Right lobe of liver (tissue), 6 donors: ENCODE measurements at regions of chr14 and their contacts with region 1.

Region 1: GRCh38 chr14:105212541-105213300 is 31.6 kb upstream of the NUDT14 start:
- DNase-seq: no peak
- ATAC-seq: no peak
- H3K4me3 ChIP-seq: no peak overlapping the region
- H3K27ac ChIP-seq: no peak overlapping the region
- H3K4me1 ChIP-seq: no peaks in the 10 kb centered on the region
- H3K27me3 ChIP-seq: no peaks in the 10 kb centered on the region
- CTCF ChIP-seq: no peak
- POLR2A ChIP-seq: no peak

Region 2: GRCh38 chr14:105100931-105101330 is 111.8 kb before region 1 on chr14:
- intact Hi-C with region 1: no loop called
- DNase-seq: no peak
- ATAC-seq: no peak
- H3K4me3 ChIP-seq: no peak overlapping the region
- H3K27ac ChIP-seq: no peak overlapping the region
- H3K4me1 ChIP-seq: no peaks in the 10 kb centered on the region
- H3K27me3 ChIP-seq: no peaks in the 10 kb centered on the region
- CTCF ChIP-seq: no peak
- POLR2A ChIP-seq: no peak

Region 3: DNA sequence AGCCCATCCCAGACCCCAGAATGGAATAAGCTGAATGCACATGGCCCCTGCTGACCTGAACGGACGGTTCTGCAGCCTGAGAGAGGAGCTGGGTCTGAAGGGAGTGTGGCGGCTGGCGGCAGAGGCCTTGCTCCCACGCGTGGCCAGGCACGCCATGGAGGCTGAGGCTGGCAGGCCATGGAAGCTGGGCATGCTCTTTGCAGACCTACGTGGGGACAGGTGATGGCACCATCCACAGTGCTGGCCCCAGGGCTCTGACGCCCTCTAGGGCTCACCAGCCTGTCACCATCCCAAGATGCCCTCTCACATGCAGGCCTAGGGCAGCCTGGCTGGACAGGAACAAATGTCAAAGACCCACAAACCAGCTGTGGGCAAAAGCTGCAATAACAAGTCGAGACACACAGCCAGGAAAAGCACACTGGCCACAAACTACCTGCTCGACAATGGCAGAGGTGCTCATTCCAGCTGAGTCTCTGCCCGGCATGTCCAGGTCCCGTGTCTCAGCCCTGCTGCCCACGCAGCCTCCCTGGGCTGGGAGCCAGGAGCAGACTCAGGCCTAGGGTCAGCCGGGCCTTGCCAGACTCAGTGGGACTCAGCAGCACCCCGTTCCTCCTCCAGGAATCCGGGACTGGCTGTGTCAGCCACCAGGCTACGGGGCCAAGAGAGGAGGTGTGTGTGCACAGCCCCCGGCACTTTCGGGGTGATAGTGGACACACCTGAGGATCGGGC is 55.3 kb after region 1 on chr14:
- intact Hi-C with region 1: loop called in 1 of 2 experiments (anchors 10 kb)
- DNase-seq: no peak
- ATAC-seq: peak; percentile 67 to 85 (median 70)
- H3K4me3 ChIP-seq: no peak overlapping the region
- H3K27ac ChIP-seq: no peak overlapping the region
- H3K4me1 ChIP-seq: no peaks in the 10 kb centered on the region
- H3K27me3 ChIP-seq: no peaks in the 10 kb centered on the region
- CTCF ChIP-seq: peak in 2 of 4 donors; percentile 13 to 25
- POLR2A ChIP-seq: no peak

Region 4: GRCh38 chr14:105300792-105301533 is 88.2 kb after region 1 on chr14 and contains the start of gene BRF1:
- intact Hi-C with region 1: no loop called
- DNase-seq: peak; percentile 99 to 100 (median 100)
- ATAC-seq: peak; percentile 95 to 96 (median 96)
- H3K4me3 ChIP-seq: peak within 1 kb of the TSS; percentile 55 to 96 (median 77)
- H3K27ac ChIP-seq: peak within 1 kb of the TSS; percentile 36 to 89 (median 80)
- H3K4me1 ChIP-seq: peaks cover 0 to 17% (median 7%) of the 10 kb centered on the region in 4 donors
- H3K27me3 ChIP-seq: no peaks in the 10 kb centered on the region
- CTCF ChIP-seq: no peak
- POLR2A ChIP-seq: peak; percentile 87
- total RNA-seq, gene BRF1: 13.1 to 17.8 (median 16.2) TPM

Region 5: DNA sequence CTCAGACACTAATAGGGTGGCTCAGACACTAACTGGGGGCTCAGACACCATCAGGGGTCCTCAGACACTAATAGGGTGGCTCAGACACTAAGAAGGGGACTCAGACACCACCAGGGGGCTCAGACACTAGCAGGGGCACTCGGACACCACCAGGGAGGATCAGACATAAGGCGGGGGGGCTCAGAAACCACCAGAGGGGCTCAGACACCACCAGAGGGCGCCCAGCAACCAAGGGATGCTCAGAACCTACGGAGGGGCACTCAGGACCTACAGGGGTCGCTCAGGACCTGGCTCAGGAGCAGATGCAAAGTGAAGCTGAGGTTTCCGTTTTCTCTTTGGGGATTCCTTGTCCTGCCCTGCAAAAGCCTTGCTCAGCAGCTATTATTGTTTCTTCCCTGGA is 762.2 kb after region 1 on chr14:
- intact Hi-C with region 1: no loop called
- DNase-seq: no peak
- ATAC-seq: no peak
- H3K4me3 ChIP-seq: no peak overlapping the region
- H3K27ac ChIP-seq: no peak overlapping the region
- H3K4me1 ChIP-seq: no peaks in the 10 kb centered on the region
- H3K27me3 ChIP-seq: no peaks in the 10 kb centered on the region
- CTCF ChIP-seq: peak in 2 of 4 donors; percentile 12 to 13
- POLR2A ChIP-seq: no peak